H1 (cell line): ENCODE measurements at regions of chr16 and their contacts with region 1.

Region 1: GRCh38 chr16:12885742-12886141 is 15.7 kb upstream of the SHISA9 start:
- DNase-seq: no peak
- H3K4me3 ChIP-seq: no peak overlapping the region
- H3K27ac ChIP-seq: no peak overlapping the region
- H3K4me1 ChIP-seq: no peaks in the 10 kb centered on the region
- H3K27me3 ChIP-seq: no peaks in the 10 kb centered on the region
- CTCF ChIP-seq: no peak
- EP300 ChIP-seq: no peak
- POLR2A ChIP-seq: no peak
- RAD21 ChIP-seq: no peak

Region 2: DNA sequence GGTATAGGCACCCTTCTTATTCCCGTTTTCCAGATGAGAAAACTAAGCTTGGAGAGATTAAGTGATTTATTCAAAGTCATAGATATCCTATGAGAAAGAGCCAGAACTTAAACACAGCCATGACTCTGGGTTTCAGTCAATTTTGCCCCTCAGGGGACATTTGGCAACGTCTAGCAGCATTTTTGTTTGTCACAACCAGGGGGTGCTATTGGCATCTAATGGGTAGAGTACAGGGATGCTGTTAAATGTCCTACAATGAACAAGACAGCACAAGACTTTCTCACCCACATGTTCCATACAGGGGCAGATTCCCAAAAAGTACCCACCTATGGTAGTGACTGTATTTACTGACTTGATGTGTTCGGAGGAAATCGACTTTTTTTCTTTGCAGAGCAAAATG is 10.8 kb after region 1 on chr16:
- CTCF ChIA-PET with region 1: interaction called, 17 read pairs
- POLR2A ChIA-PET with region 1: no interaction called
- DNase-seq: no peak
- H3K4me3 ChIP-seq: no peak overlapping the region
- H3K27ac ChIP-seq: no peak overlapping the region
- H3K4me1 ChIP-seq: peaks cover 6 to 12% (median 8%) of the 10 kb centered on the region in 4 experiments
- H3K27me3 ChIP-seq: peaks cover 0 to 2% (median 0%) of the 10 kb centered on the region in 4 experiments; a peak in 3 of 7 replicates
- CTCF ChIP-seq: peak; percentile 5 to 80 (median 78)
- EP300 ChIP-seq: no peak
- POLR2A ChIP-seq: no peak
- RAD21 ChIP-seq: peak; percentile 86 to 93